SK-N-SH (cell line): ENCODE measurements at regions of chr7 and their contacts with region 1.

Region 1: GRCh38 chr7:100586266-100587025 is at the start of gene FBXO24:
- DNase-seq: peak; percentile 100
- H3K4me3 ChIP-seq: peak within 1 kb of the TSS; percentile 83 to 92
- H3K27ac ChIP-seq: peak within 1 kb of the TSS; percentile 77 to 94
- H3K4me1 ChIP-seq: peaks cover 6 to 15% of the 10 kb centered on the region in 2 experiments; a peak in 2 of 4 replicates
- H3K27me3 ChIP-seq: no peaks in the 10 kb centered on the region
- CTCF ChIP-seq: no peak
- EP300 ChIP-seq: no peak; a peak in 1 of 4 replicates
- RAD21 ChIP-seq: no peak
- polyA plus RNA-seq, gene FBXO24: 0.71 and 0.94 TPM in 2 replicates

Region 2: DNA sequence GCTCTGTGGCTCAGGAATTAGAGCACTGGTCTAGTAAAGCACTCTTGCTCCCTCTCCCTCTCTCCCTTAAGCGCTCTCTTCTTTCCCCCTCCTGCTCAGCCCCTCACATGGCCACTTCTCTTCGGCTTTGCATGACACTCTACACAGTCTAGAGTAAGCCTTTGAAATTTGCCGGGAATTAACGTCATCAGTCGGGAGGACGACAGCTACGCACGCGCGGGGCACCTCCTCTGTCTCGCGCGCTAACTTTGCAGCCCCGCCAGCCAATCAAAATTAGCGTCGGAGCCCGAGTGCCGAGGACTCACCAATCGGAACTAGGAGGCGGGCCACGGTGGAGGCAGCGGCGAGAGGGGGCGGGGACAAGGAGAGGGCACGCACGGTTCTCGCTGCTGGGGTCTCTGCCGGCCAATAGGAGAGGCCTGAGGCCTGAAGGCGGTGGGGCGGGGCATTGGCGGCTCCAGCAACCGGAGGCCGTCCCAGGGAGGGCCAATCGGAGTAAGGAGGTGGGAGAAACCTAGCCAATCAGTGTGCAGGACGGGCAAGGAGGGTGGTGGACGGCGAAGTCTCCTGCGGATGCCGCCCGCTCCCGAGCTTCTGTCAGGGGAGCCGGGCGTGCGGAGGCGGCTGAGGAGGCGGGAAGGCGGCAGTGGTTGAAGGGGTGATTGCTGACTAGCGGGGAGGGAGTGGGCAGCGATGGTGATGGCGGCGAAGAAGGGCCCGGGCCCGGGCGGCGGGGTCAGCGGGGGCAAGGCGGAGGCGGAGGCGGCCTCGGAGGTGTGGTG is 47.6 kb before region 1 on chr7 and contains the start of gene AGFG2:
- CTCF ChIA-PET with region 1: interaction called, 10 read pairs
- POLR2A ChIA-PET with region 1: interaction called, 3 read pairs
- DNase-seq: peak; percentile 100
- H3K4me3 ChIP-seq: peak within 1 kb of the TSS; percentile 69 to 92
- H3K27ac ChIP-seq: peak within 1 kb of the TSS in 1 of 2 experiments; percentile 63; a peak in 2 of 4 replicates
- H3K4me1 ChIP-seq: peaks cover 0 to 11% of the 10 kb centered on the region in 2 experiments; a peak in 2 of 4 replicates
- H3K27me3 ChIP-seq: no peaks in the 10 kb centered on the region
- CTCF ChIP-seq: no peak
- EP300 ChIP-seq: 0 out of 4 replicates have a peak, but pooled peaks of 1 of the 2 experiments have one; percentile 10
- RAD21 ChIP-seq: no peak
- polyA plus RNA-seq, gene AGFG2: 16.1 and 23.1 TPM in 2 replicates

Region 3: GRCh38 chr7:100598425-100598824 is 12.0 kb after region 1 on chr7:
- CTCF ChIA-PET with region 1: interaction called, 62 read pairs
- POLR2A ChIA-PET with region 1: interaction called, 63 read pairs
- DNase-seq: no peak
- H3K4me3 ChIP-seq: no peak overlapping the region
- H3K27ac ChIP-seq: no peak overlapping the region
- H3K4me1 ChIP-seq: peaks cover 10 to 18% of the 10 kb centered on the region in 2 experiments; a peak in 3 of 4 replicates
- H3K27me3 ChIP-seq: no peaks in the 10 kb centered on the region
- CTCF ChIP-seq: no peak
- EP300 ChIP-seq: no peak
- RAD21 ChIP-seq: no peak

Region 4: GRCh38 chr7:100632951-100633717 is 46.7 kb after region 1 on chr7:
- CTCF ChIA-PET with region 1: interaction called, 11 read pairs
- POLR2A ChIA-PET with region 1: no interaction called
- DNase-seq: peak; percentile 95
- H3K4me3 ChIP-seq: peak overlapping the region; percentile 43 to 59
- H3K27ac ChIP-seq: no peak overlapping the region
- H3K4me1 ChIP-seq: peaks cover 6% of the 10 kb centered on the region in 2 experiments; a peak in 1 of 4 replicates
- H3K27me3 ChIP-seq: no peaks in the 10 kb centered on the region
- CTCF ChIP-seq: peak; percentile 53
- EP300 ChIP-seq: no peak
- RAD21 ChIP-seq: peak; percentile 46

Region 5: GRCh38 chr7:100719523-100720319 is 133.3 kb after region 1 on chr7:
- CTCF ChIA-PET with region 1: interaction called, 10 read pairs
- POLR2A ChIA-PET with region 1: no interaction called
- DNase-seq: no peak
- H3K4me3 ChIP-seq: 0 out of 4 replicates have a peak overlapping the region, but pooled peaks of 1 of the 2 experiments have one; percentile 29
- H3K27ac ChIP-seq: no peak overlapping the region
- H3K4me1 ChIP-seq: peaks cover 0 to 3% of the 10 kb centered on the region in 2 experiments; a peak in 1 of 4 replicates
- H3K27me3 ChIP-seq: peaks cover 28% of the 10 kb centered on the region
- CTCF ChIP-seq: peak; percentile 47
- EP300 ChIP-seq: no peak
- RAD21 ChIP-seq: peak; percentile 56